Transverse colon (tissue), 4 donors: ENCODE measurements at regions of chrX and their contacts with region 1.

Region 1: GRCh38 chrX:137245183-137245582 is 211.4 kb upstream of the GPR101 start:
- DNase-seq: no peak
- H3K4me3 ChIP-seq: no peak overlapping the region
- H3K27ac ChIP-seq: no peak overlapping the region
- H3K4me1 ChIP-seq: no peaks in the 10 kb centered on the region
- H3K27me3 ChIP-seq: no peaks in the 10 kb centered on the region
- CTCF ChIP-seq: no peak
- EP300 ChIP-seq: no peak
- POLR2A ChIP-seq: no peak

Region 2: GRCh38 chrX:136767104-136767941 is 477.9 kb before region 1 on chrX:
- in situ Hi-C with region 1: no loop called
- intact Hi-C with region 1: no loop called
- DNase-seq: peak; percentile 64
- H3K4me3 ChIP-seq: peak overlapping the region; percentile 44 to 71 (median 50)
- H3K27ac ChIP-seq: peak overlapping the region; percentile 83 to 87 (median 85)
- H3K4me1 ChIP-seq: peaks cover 0 to 4% (median 2%) of the 10 kb centered on the region in 4 donors
- H3K27me3 ChIP-seq: no peaks in the 10 kb centered on the region
- CTCF ChIP-seq: peak in 3 of 5 experiments; percentile 14 to 36 (median 20)
- EP300 ChIP-seq: no peak
- POLR2A ChIP-seq: no peak

Region 3: GRCh38 chrX:136847876-136848337 is 397.3 kb before region 1 on chrX:
- in situ Hi-C with region 1: no loop called
- intact Hi-C with region 1: no loop called
- DNase-seq: no peak
- H3K4me3 ChIP-seq: no peak overlapping the region
- H3K27ac ChIP-seq: no peak overlapping the region
- H3K4me1 ChIP-seq: no peaks in the 10 kb centered on the region
- H3K27me3 ChIP-seq: no peaks in the 10 kb centered on the region
- CTCF ChIP-seq: no peak
- EP300 ChIP-seq: no peak
- POLR2A ChIP-seq: no peak

Region 4: GRCh38 chrX:137081239-137081638 is 163.9 kb before region 1 on chrX:
- in situ Hi-C with region 1: no loop called
- intact Hi-C with region 1: no loop called
- DNase-seq: no peak
- H3K4me3 ChIP-seq: no peak overlapping the region
- H3K27ac ChIP-seq: no peak overlapping the region
- H3K4me1 ChIP-seq: no peaks in the 10 kb centered on the region
- H3K27me3 ChIP-seq: no peaks in the 10 kb centered on the region
- CTCF ChIP-seq: no peak
- EP300 ChIP-seq: no peak
- POLR2A ChIP-seq: no peak

Region 5: GRCh38 chrX:137101273-137101990 is 143.8 kb before region 1 on chrX:
- in situ Hi-C with region 1: no loop called
- intact Hi-C with region 1: no loop called
- DNase-seq: no peak
- H3K4me3 ChIP-seq: no peak overlapping the region
- H3K27ac ChIP-seq: no peak overlapping the region
- H3K4me1 ChIP-seq: no peaks in the 10 kb centered on the region
- H3K27me3 ChIP-seq: no peaks in the 10 kb centered on the region
- CTCF ChIP-seq: no peak
- EP300 ChIP-seq: no peak
- POLR2A ChIP-seq: no peak

Region 6: DNA sequence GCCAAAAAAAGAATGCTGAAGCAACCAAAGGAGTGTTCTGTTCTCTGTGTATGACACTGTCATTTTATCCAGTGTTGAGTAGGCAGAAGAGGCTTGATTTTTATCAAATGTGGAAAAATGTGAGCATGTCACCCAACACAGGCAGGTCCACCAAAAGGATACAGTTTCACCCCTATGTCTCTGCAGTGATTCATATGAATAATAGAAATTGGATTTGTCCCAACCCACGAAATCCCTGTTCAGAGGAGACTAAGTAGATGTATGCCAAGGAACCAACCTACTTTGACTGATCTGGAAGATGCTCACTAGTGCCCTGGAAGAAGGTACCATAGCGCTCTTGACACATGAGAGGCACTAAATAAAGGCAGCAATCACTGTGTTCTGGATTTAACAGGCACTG is 1393.8 kb after region 1 on chrX:
- in situ Hi-C with region 1: no loop called
- intact Hi-C with region 1: loop called (anchors 5 kb)
- DNase-seq: no peak
- H3K4me3 ChIP-seq: no peak overlapping the region
- H3K27ac ChIP-seq: no peak overlapping the region
- H3K4me1 ChIP-seq: no peaks in the 10 kb centered on the region
- H3K27me3 ChIP-seq: no peaks in the 10 kb centered on the region
- CTCF ChIP-seq: no peak
- EP300 ChIP-seq: no peak
- POLR2A ChIP-seq: no peak